ENCODE measurements at regions of chr3 and their contacts with region 1.

Region 1: GRCh38 chr3:99499235-99500158 is 138.9 kb upstream of the COL8A1 start:
- DNase-seq: no peak

Region 2: DNA sequence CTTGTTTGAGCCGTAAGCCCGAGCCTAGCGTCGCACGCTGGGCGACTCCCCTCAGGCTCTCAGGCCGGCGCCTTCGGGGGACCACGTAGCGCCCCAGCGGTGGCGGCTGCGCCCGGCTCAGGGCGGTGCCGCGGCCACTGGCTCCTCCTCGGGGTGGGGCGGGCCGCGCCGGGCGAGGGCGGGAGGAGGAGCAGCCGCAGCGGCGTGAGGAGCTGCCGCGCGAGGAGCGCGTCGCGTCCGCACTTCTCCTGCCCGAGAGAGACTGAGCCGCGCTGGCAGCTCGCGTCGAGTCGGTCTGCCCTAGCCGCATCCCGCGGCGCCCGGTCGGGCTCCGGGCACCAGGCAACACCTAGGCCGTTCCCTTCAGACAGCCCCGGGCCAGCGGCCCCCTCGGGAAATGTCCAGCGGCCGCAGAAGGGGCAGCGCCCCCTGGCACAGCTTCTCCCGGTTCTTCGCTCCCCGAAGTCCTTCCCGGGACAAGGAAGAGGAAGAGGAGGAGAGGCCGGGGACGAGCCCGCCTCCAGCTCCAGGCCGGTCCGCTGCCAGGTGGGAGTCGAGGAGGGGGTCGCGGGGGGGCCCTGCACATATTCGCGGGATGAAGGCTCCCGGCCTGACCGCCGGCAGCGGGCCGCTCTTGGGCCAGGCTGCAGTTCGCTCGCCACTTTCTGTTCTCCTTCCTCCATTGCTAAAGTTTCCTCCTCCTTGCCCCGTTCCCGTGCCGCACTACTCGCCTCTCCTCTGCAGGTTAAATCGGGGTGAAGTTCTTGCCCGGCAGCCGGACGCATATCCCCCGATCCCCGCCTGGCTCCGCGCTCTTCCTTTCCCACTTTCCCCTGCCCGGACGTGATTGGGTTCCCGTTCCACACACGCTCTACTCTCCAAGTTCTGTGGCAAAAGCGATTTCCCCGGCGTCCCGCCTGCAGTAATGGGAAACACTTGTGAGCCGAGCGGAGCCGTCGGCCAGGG is 1677.4 kb before region 1 on chr3 and contains the start of gene CRYBG3:
- intact Hi-C with region 1: loop called (anchors 10 kb)
- DNase-seq: peak; percentile 93
- total RNA-seq, gene CRYBG3: 38.2 TPM

Region 3: GRCh38 chr3:99532246-99532645 is 32.7 kb after region 1 on chr3:
- intact Hi-C with region 1: loop called (anchors 5 kb)
- DNase-seq: no peak

Region 4: DNA sequence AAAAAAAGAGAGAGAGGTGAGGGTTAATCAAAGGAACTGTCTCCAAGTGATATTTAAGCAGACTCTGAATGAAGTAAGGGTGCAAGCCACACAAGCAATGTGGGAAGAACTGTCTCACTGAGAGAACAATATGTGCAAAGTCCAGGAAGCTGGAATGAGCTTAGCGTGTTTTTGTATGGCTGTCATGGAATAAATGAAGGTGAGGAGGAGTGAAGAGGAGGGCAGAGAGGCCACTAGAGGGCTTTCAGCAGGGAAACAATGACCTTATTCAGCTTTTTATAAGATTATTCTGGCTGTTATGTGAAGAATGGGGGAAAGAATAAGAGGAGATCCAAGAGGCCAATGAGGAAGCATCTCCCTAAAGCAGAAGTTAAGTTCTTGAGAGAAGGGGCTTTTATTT is 52.0 kb after region 1 on chr3:
- intact Hi-C with region 1: loop called (anchors 2 kb)
- DNase-seq: no peak

Region 5: GRCh38 chr3:99638167-99638948 is 138.9 kb after region 1 on chr3 and contains the start of gene COL8A1:
- intact Hi-C with region 1: loop called (anchors 10 kb)
- DNase-seq: peak; percentile 80
- total RNA-seq, gene COL8A1: 28.5 TPM

Region 6: DNA sequence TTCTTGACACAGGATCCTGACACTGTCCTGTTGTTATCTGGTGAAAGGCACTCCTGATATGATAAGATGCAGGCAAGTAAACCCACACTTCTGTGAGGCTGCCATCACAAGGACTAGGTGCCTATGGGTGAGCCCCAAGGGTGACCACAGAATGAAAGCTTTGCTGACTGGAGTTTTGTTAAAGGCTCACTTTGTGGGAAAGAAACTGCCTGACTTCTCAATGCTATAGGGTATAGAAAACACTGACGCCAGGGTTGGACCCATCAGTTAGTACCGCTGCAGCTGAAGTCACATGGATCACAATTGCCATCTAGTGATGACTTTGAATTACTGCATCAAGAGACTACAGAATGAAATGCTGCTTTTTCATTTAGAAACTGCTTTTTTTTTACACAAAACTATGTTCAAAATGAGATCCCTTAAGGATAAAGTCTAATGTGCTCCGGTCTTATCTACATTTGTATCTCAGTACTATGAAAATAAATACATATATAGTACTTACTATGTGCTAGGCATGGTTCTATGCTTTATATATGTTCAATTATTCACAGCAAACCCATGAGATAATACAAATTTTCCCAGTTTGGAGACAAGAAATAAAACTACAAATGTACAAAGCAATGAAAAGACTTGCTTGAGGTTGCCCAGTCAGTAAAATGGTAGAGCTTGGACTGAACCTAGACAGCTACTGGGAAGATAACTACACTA is 253.9 kb after region 1 on chr3:
- intact Hi-C with region 1: loop called (anchors 2 kb)
- DNase-seq: no peak